K562 (cell line): ENCODE measurements at regions of chr1 and their contacts with region 1.

Region 1: GRCh38 chr1:165738794-165739193 is 29.9 kb downstream of the TMCO1 start:
- DNase-seq: no peak
- ATAC-seq: no peak
- H3K4me3 ChIP-seq: no peak overlapping the region
- H3K27ac ChIP-seq: no peak overlapping the region
- H3K4me1 ChIP-seq: no peaks in the 10 kb centered on the region
- H3K27me3 ChIP-seq: no peaks in the 10 kb centered on the region
- CTCF ChIP-seq: no peak
- EP300 ChIP-seq: no peak
- POLR2A ChIP-seq: no peak
- RAD21 ChIP-seq: no peak

Region 2: GRCh38 chr1:165726169-165726568 is 12.6 kb before region 1 on chr1:
- CTCF ChIA-PET with region 1: no interaction called
- POLR2A ChIA-PET with region 1: interaction called, 11 read pairs
- in situ Hi-C with region 1: no loop called
- intact Hi-C with region 1: no loop called
- DNase-seq: no peak
- ATAC-seq: peak; percentile 41; the same call in 2 of the 3 replicates
- H3K4me3 ChIP-seq: no peak overlapping the region
- H3K27ac ChIP-seq: no peak overlapping the region
- H3K4me1 ChIP-seq: no peaks in the 10 kb centered on the region
- H3K27me3 ChIP-seq: no peaks in the 10 kb centered on the region
- CTCF ChIP-seq: no peak
- EP300 ChIP-seq: no peak
- POLR2A ChIP-seq: no peak
- RAD21 ChIP-seq: no peak